ENCODE measurements at regions of chr17 and their contacts with region 1.

Region 1: GRCh38 chr17:9370467-9370866 is 205.2 kb downstream of the STX8 start:
- DNase-seq: no peak
- H3K4me3 Mint-ChIP-seq: no peak overlapping the region
- H3K27ac Mint-ChIP-seq: no peak overlapping the region
- H3K4me1 Mint-ChIP-seq: peaks cover 11% of the 10 kb centered on the region
- H3K27me3 Mint-ChIP-seq: no peaks in the 10 kb centered on the region
- CTCF ChIP-seq: no peak

Region 2: GRCh38 chr17:8727065-8727511 is 643.4 kb before region 1 on chr17:
- CTCF ChIA-PET with region 1: no interaction called
- intact Hi-C with region 1: no loop called
- DNase-seq: no peak
- H3K4me3 Mint-ChIP-seq: no peak overlapping the region
- H3K27ac Mint-ChIP-seq: no peak overlapping the region
- H3K4me1 Mint-ChIP-seq: no peaks in the 10 kb centered on the region
- H3K27me3 Mint-ChIP-seq: peaks cover 34% of the 10 kb centered on the region
- CTCF ChIP-seq: no peak

Region 3: GRCh38 chr17:8986290-8986689 is 384.2 kb before region 1 on chr17:
- CTCF ChIA-PET with region 1: interaction called, 10 read pairs
- intact Hi-C with region 1: no loop called
- DNase-seq: no peak
- H3K4me3 Mint-ChIP-seq: no peak overlapping the region
- H3K27ac Mint-ChIP-seq: no peak overlapping the region
- H3K4me1 Mint-ChIP-seq: no peaks in the 10 kb centered on the region
- H3K27me3 Mint-ChIP-seq: no peaks in the 10 kb centered on the region
- CTCF ChIP-seq: no peak

Measured in Calu3 (cell line).